ENCODE measurements at regions of chr14 and their contacts with region 1.

Region 1: GRCh38 chr14:99382781-99383451 is 97.7 kb downstream of the SETD3 start:
- DNase-seq: no peak
- ATAC-seq: peak; percentile 11; the same call in 1 of the 3 replicates
- H3K4me3 ChIP-seq: no peak overlapping the region
- H3K27ac ChIP-seq: no peak overlapping the region
- H3K4me1 ChIP-seq: peaks cover 44% of the 10 kb centered on the region
- H3K27me3 ChIP-seq: peaks cover 6 to 31% of the 10 kb centered on the region in 2 experiments; a peak in 4 of 5 replicates
- CTCF ChIP-seq: no peak
- EP300 ChIP-seq: no peak
- POLR2A ChIP-seq: no peak
- RAD21 ChIP-seq: no peak

Region 2: DNA sequence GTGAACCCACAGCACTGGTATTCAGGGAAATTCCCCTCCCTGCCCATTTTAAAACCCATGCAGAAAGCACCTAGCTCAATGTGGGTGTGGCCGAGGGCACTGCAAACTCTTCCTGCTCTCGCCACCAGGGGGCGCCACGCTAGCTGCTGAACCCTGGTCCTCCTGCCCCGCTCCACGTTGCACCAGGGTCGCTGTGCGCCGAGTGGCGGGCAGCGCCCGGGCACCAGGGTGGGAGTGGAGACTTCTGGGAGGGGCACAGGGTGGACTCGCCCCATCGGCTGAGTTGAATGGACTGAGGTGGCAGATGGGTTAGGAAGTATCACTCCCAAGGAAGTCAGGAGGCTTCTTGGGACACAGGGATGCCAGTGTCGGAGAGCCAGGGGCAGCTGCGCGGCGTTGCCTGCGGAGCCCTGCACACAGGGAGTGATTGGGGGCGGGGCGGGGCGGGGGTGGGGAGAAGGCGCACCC is 62.8 kb before region 1 on chr14:
- CTCF ChIA-PET with region 1: no interaction called
- POLR2A ChIA-PET with region 1: no interaction called
- in situ Hi-C with region 1: no loop called
- intact Hi-C with region 1: loop called (anchors 5 kb)
- DNase-seq: peak; percentile 29
- ATAC-seq: peak; percentile 12; the same call in 2 of the 3 replicates
- H3K4me3 ChIP-seq: no peak overlapping the region
- H3K27ac ChIP-seq: no peak overlapping the region
- H3K4me1 ChIP-seq: peaks cover 80% of the 10 kb centered on the region
- H3K27me3 ChIP-seq: no peaks in the 10 kb centered on the region
- CTCF ChIP-seq: peak; percentile 80
- EP300 ChIP-seq: no peak
- POLR2A ChIP-seq: no peak
- RAD21 ChIP-seq: peak; percentile 36; the same call in 1 of the 2 replicates

Region 3: DNA sequence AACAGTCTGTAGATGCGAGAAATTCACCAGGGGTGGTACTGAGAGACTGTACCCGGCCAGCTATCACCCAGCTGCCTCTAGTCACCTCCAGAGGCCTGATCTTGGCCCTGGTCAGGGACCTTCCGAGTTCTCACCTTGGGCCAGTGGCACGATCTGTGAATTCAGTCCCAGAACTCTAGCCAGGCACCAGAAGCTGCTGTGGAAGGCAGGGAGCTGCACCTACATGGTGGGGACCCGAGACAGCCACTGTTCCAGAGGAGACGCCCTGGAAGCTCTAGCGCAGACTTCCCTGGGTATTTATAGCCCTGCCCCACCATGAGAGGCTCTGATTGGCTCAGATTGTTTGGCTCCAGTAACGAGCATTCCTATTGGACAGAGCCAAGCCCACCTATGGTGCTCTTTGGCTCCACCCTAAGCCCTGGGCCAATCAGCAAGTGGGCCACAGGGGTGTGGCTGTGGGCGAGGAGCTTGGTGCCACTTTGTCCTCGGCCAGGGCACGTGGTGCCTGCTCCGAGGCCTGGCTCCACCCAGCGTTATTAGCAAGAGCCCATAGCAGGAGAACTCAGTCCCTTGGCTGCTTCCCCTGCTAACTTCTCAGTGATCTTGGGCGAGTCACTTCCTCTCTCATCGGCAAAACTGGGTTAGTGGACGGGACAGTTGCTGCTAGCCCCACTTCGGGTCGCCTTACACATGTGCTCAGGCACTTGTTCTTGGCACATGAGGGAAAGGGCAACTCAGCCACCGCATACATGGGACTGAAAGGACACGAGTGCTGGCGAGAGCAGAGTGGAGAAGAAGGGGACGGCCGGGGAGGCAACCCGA is 21.9 kb before region 1 on chr14:
- CTCF ChIA-PET with region 1: no interaction called
- POLR2A ChIA-PET with region 1: no interaction called
- in situ Hi-C with region 1: no loop called
- intact Hi-C with region 1: no loop called
- DNase-seq: peak; percentile 6
- ATAC-seq: peak; percentile 36
- H3K4me3 ChIP-seq: no peak overlapping the region
- H3K27ac ChIP-seq: no peak overlapping the region
- H3K4me1 ChIP-seq: 0 out of 2 replicates have a peak, but pooled peaks cover 5% of the 10 kb centered on the region
- H3K27me3 ChIP-seq: 0 out of 5 replicates have a peak, but pooled peaks cover 0 to 6% of the 10 kb centered on the region in 2 experiments
- CTCF ChIP-seq: no peak
- EP300 ChIP-seq: no peak
- POLR2A ChIP-seq: no peak
- RAD21 ChIP-seq: no peak

Region 4: DNA sequence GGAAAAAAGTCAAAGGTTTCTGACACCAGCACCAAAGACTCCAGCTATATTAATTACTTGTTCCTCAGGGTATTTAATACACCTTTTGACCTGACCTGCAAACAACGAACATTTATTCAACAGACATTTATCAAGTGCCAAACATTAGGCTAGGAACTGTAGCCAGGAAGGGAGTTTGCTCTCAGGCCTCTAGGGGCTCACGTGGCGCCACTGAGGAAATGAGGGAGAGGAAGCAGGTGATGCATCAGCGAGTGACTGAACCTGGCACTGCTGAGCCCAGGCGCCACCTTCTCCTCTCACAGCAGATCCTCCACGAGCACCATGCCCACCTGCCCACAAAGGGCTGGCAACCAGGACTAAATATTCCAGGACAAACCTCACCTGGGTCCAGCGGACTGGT is 47.5 kb after region 1 on chr14:
- CTCF ChIA-PET with region 1: no interaction called
- POLR2A ChIA-PET with region 1: no interaction called
- in situ Hi-C with region 1: no loop called
- intact Hi-C with region 1: no loop called
- DNase-seq: no peak
- ATAC-seq: peak; percentile 76
- H3K4me3 ChIP-seq: no peak overlapping the region
- H3K27ac ChIP-seq: no peak overlapping the region
- H3K4me1 ChIP-seq: no peaks in the 10 kb centered on the region
- H3K27me3 ChIP-seq: no peaks in the 10 kb centered on the region
- CTCF ChIP-seq: no peak
- EP300 ChIP-seq: no peak
- POLR2A ChIP-seq: no peak
- RAD21 ChIP-seq: no peak

Measured in HepG2 (cell line).